Activated naive CD4-positive, alpha-beta T cell treated with anti-CD3 and anti-CD28 coated beads, Interleukin-2, amount 10 ng/mL, durations not matched to agents 7 days and 5 days (primary cell): ENCODE measurements at regions of chr11 and their contacts with region 1.

Region 1: GRCh38 chr11:125123947-125124617 is 12.7 kb upstream of the TMEM218 start:
- DNase-seq: peak; percentile 56
- H3K4me3 Mint-ChIP-seq: no peak overlapping the region
- H3K27ac Mint-ChIP-seq: no peak overlapping the region
- H3K4me1 Mint-ChIP-seq: peaks cover 4% of the 10 kb centered on the region
- H3K27me3 Mint-ChIP-seq: peaks cover 49% of the 10 kb centered on the region

Region 2: GRCh38 chr11:125091247-125091876 is 32.7 kb before region 1 on chr11:
- CTCF ChIA-PET with region 1: interaction called, 16 read pairs
- DNase-seq: no peak
- H3K4me3 Mint-ChIP-seq: no peak overlapping the region
- H3K27ac Mint-ChIP-seq: no peak overlapping the region
- H3K4me1 Mint-ChIP-seq: peaks cover 5% of the 10 kb centered on the region
- H3K27me3 Mint-ChIP-seq: no peaks in the 10 kb centered on the region

Region 3: GRCh38 chr11:125111343-125112207 is 12.5 kb before region 1 on chr11 and contains the start of gene TMEM218:
- CTCF ChIA-PET with region 1: interaction called, 20 read pairs
- DNase-seq: peak; percentile 98
- H3K4me3 Mint-ChIP-seq: peak within 1 kb of the TSS; percentile 96
- H3K27ac Mint-ChIP-seq: peak within 1 kb of the TSS; percentile 92
- H3K4me1 Mint-ChIP-seq: peaks cover 19% of the 10 kb centered on the region
- H3K27me3 Mint-ChIP-seq: peaks cover 17% of the 10 kb centered on the region